ENCODE measurements at regions of chr17 and their contacts with region 1.

Region 1: GRCh38 chr17:63611354-63611753 is 10.7 kb downstream of the TACO1 start:
- H3K4me3 ChIP-seq: no peak overlapping the region
- H3K27ac ChIP-seq: 0 out of 2 replicates have a peak overlapping the region, but pooled peaks have one; percentile 16
- H3K4me1 ChIP-seq: no peaks in the 10 kb centered on the region
- CTCF ChIP-seq: no peak

Region 2: GRCh38 chr17:63381101-63381729 is 230.1 kb before region 1 on chr17:
- CTCF ChIA-PET with region 1: no interaction called
- POLR2A ChIA-PET with region 1: no interaction called
- H3K4me3 ChIP-seq: no peak overlapping the region
- H3K27ac ChIP-seq: no peak overlapping the region
- H3K4me1 ChIP-seq: no peaks in the 10 kb centered on the region
- CTCF ChIP-seq: no peak

Region 3: DNA sequence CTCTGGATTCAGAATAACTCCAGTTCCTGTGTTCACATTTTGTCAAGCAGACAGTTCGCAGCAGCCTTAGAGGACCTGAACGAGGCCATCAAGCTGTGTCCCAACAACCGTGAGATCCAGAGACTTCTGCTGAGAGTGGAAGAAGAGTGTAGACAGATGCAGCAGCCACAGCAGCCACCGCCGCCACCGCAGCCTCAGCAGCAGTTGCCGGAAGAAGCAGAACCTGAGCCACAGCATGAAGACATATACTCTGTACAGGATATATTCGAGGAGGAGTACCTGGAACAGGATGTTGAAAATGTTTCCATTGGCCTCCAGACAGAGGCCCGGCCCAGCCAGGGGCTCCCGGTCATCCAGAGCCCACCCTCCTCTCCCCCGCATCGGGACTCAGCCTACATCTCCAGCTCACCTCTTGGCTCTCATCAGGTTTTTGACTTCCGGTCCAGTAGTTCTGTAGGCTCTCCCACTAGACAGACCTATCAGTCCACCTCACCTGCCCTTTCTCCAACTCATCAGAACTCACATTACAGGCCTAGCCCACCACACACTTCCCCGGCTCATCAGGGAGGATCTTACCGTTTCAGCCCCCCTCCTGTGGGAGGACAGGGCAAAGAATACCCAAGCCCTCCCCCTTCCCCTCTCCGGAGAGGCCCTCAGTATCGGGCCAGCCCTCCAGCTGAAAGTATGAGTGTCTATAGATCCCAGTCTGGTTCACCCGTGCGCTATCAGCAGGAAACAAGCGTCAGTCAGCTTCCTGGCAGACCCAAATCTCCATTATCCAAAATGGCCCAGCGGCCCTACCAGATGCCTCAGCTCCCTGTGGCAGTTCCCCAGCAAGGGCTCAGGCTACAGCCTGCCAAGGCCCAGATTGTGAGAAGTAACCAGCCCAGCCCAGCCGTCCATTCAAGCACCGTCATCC is 191.1 kb before region 1 on chr17:
- CTCF ChIA-PET with region 1: interaction called, 106 read pairs
- POLR2A ChIA-PET with region 1: interaction called, 5 read pairs
- H3K4me3 ChIP-seq: no peak overlapping the region
- H3K27ac ChIP-seq: no peak overlapping the region
- H3K4me1 ChIP-seq: no peaks in the 10 kb centered on the region
- CTCF ChIP-seq: no peak

Region 4: GRCh38 chr17:63445979-63446691 is 165.2 kb before region 1 on chr17 and contains the start of gene CYB561:
- CTCF ChIA-PET with region 1: interaction called, 12 read pairs
- POLR2A ChIA-PET with region 1: no interaction called
- H3K4me3 ChIP-seq: peak within 1 kb of the TSS; percentile 41
- H3K27ac ChIP-seq: peak within 1 kb of the TSS; percentile 48; the same call in 1 of the 2 replicates
- H3K4me1 ChIP-seq: 0 out of 2 replicates have a peak, but pooled peaks cover 2% of the 10 kb centered on the region
- CTCF ChIP-seq: no peak

Region 5: GRCh38 chr17:63571763-63572271 is 39.5 kb before region 1 on chr17:
- CTCF ChIA-PET with region 1: interaction called, 12 read pairs
- POLR2A ChIA-PET with region 1: no interaction called
- H3K4me3 ChIP-seq: no peak overlapping the region
- H3K27ac ChIP-seq: no peak overlapping the region
- H3K4me1 ChIP-seq: no peaks in the 10 kb centered on the region; the same call in 1 of the 2 replicates
- CTCF ChIP-seq: no peak

Region 6: GRCh38 chr17:63621766-63622519 is 10.6 kb after region 1 on chr17 and contains the start of gene MAP3K3:
- CTCF ChIA-PET with region 1: interaction called, 32 read pairs
- POLR2A ChIA-PET with region 1: interaction called, 32 read pairs
- H3K4me3 ChIP-seq: peak within 1 kb of the TSS; percentile 93
- H3K27ac ChIP-seq: peak within 1 kb of the TSS; percentile 89
- H3K4me1 ChIP-seq: peaks cover 13% of the 10 kb centered on the region
- CTCF ChIP-seq: peak; percentile 93

Region 7: DNA sequence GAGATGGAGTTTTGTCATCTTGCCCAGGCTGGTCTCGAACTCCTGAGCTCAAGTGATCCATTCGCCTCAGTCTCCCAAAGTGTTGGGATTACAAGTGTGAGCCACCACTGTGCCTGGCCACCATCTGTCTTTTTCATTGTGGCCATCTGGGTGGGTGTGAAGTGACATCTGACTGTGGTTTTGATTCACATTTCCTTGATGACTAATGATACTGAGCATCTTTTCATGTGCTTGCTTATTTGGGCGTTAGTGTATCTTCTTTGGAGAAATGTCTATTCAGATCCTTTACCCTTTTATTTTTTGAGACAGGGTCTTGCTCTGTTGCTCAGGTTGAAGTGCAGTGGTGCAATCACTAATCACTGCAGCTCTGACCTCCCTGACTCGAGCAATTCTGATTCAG is 572.5 kb after region 1 on chr17:
- CTCF ChIA-PET with region 1: no interaction called
- POLR2A ChIA-PET with region 1: no interaction called
- H3K4me3 ChIP-seq: no peak overlapping the region
- H3K27ac ChIP-seq: no peak overlapping the region
- H3K4me1 ChIP-seq: no peaks in the 10 kb centered on the region
- CTCF ChIP-seq: no peak